ENCODE measurements at regions of chr10 and their contacts with region 1.

Region 1: DNA sequence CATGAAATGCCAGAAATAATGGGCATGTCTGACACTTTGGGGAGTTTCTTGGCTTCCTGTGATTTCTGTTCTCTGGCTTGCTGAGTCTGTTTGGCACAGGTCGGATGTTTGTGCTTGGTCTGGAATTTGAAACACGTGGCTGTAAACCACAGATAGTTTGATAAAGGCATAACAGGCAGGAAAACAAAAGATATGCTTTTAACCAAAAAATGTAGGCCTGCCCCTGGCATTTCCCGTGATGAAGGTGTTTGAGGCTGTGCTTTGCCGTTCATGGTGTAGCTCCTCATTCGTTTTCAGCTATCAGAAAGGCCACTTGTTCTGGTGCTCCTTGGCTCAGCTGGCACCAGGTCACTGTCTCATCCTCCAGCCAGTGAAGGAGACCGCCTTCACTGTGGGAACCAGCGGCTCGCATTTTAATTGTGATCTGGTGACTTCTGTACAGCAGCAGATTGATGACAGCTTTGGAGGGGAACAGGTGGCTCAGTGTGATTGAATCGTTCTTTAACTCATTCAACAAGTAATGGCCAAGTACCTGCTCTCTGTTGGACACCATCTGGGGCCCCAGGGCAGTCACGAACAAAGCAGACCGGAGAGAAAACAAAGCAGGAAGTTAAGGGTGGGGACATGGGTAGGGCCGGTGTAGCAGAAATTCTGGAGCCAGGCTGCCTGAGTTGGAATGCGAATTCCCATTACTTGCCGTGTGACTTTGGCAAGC is 111.5 kb downstream of the CCNY start:
- DNase-seq: no peak
- ATAC-seq: peak in 3 of 4 donors; percentile 29 to 36 (median 31)
- H3K4me3 ChIP-seq: peak overlapping the region in 3 of 12 donors; percentile 6 to 12 (median 11)
- H3K27ac ChIP-seq: peak overlapping the region; percentile 69 to 95 (median 82)
- H3K4me1 ChIP-seq: peaks cover 0 to 84% (median 74%) of the 10 kb centered on the region in 12 donors
- H3K27me3 ChIP-seq: no peaks in the 10 kb centered on the region
- CTCF ChIP-seq: no peak
- POLR2A ChIP-seq: no peak

Region 2: GRCh38 chr10:35372329-35372728 is 75.5 kb before region 1 on chr10:
- intact Hi-C with region 1: loop called in 2 of 10 experiments (anchors 5 kb)
- DNase-seq: peak; percentile 70 to 82 (median 74)
- ATAC-seq: peak; percentile 96 to 97 (median 96)
- H3K4me3 ChIP-seq: no peak overlapping the region
- H3K27ac ChIP-seq: peak overlapping the region; percentile 55 to 93 (median 84)
- H3K4me1 ChIP-seq: peaks cover 16 to 98% (median 73%) of the 10 kb centered on the region in 12 donors
- H3K27me3 ChIP-seq: no peaks in the 10 kb centered on the region
- CTCF ChIP-seq: no peak
- POLR2A ChIP-seq: peak in 1 of 2 donors; percentile 26

Region 3: GRCh38 chr10:35379226-35380137 is 68.4 kb before region 1 on chr10:
- intact Hi-C with region 1: loop called in 4 of 10 experiments (anchors 5 to 10 kb)
- DNase-seq: peak in 4 of 5 donors; percentile 66 to 75 (median 70)
- ATAC-seq: peak; percentile 67 to 92 (median 86)
- H3K4me3 ChIP-seq: peak overlapping the region in 5 of 12 donors; percentile 1 to 24 (median 16)
- H3K27ac ChIP-seq: peak overlapping the region; percentile 66 to 88 (median 79)
- H3K4me1 ChIP-seq: peaks cover 16 to 93% (median 70%) of the 10 kb centered on the region in 12 donors
- H3K27me3 ChIP-seq: no peaks in the 10 kb centered on the region
- CTCF ChIP-seq: peak in 5 of 12 donors; percentile 20 to 48 (median 26)
- POLR2A ChIP-seq: no peak

Region 4: DNA sequence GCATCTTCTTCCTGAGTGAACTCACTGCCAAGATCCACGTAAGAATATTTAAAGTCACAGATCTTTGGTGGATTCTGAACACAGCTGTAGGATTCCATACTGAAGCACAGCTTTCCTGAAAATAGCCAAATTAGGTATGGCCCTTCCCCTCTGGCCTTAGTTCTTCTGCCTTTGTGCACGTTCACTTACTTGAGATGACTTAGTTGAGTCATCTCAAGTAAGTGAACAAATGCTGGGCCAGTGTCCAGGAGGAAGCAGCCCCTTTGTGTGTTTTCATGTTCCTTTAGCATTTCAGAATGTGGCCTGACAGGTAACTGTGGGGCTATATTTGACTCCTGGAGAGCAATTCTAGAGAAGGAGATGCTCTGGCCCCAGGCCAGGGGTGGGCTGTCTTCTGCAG is 60.1 kb before region 1 on chr10:
- intact Hi-C with region 1: loop called in 3 of 10 experiments (anchors 5 to 10 kb)
- DNase-seq: no peak
- ATAC-seq: peak in 2 of 4 donors; percentile 21 to 31
- H3K4me3 ChIP-seq: no peak overlapping the region
- H3K27ac ChIP-seq: peak overlapping the region in 11 of 12 donors; percentile 6 to 84 (median 61)
- H3K4me1 ChIP-seq: peaks cover 13 to 90% (median 59%) of the 10 kb centered on the region in 12 donors
- H3K27me3 ChIP-seq: no peaks in the 10 kb centered on the region
- CTCF ChIP-seq: no peak
- POLR2A ChIP-seq: no peak

Region 5: GRCh38 chr10:35495521-35496119 is 47.8 kb after region 1 on chr10:
- intact Hi-C with region 1: loop called in 1 of 10 experiments (anchors 10 kb)
- DNase-seq: peak in 2 of 5 donors; percentile 33 to 52
- ATAC-seq: peak; percentile 69 to 76 (median 72)
- H3K4me3 ChIP-seq: no peak overlapping the region
- H3K27ac ChIP-seq: peak overlapping the region in 11 of 12 donors; percentile 0 to 64 (median 35)
- H3K4me1 ChIP-seq: peaks cover 0 to 73% (median 32%) of the 10 kb centered on the region in 12 donors
- H3K27me3 ChIP-seq: no peaks in the 10 kb centered on the region
- CTCF ChIP-seq: no peak
- POLR2A ChIP-seq: no peak

Region 6: GRCh38 chr10:36802490-36803153 is 1354.8 kb after region 1 on chr10:
- intact Hi-C with region 1: no loop called
- DNase-seq: peak in 4 of 5 donors; percentile 24 to 58 (median 40)
- ATAC-seq: peak; percentile 42 to 92 (median 88)
- H3K4me3 ChIP-seq: peak overlapping the region in 1 of 12 donors; percentile 13
- H3K27ac ChIP-seq: peak overlapping the region in 6 of 12 donors; percentile 15 to 39 (median 27)
- H3K4me1 ChIP-seq: peaks cover 0 to 18% (median 6%) of the 10 kb centered on the region in 12 donors
- H3K27me3 ChIP-seq: no peaks in the 10 kb centered on the region
- CTCF ChIP-seq: no peak
- POLR2A ChIP-seq: no peak

Measured in heart left ventricle (tissue), 16 donors.